CD4-positive, alpha-beta T cell (primary cell): ENCODE measurements at regions of chr3 and their contacts with region 1.

Region 1: GRCh38 chr3:152268555-152269425 is at the start of gene MBNL1:
- DNase-seq: peak; percentile 75 to 95 (median 82)
- ATAC-seq: peak; percentile 58
- H3K4me3 ChIP-seq: peak within 1 kb of the TSS; percentile 90
- H3K4me3 Mint-ChIP-seq: peak within 1 kb of the TSS; percentile 94
- H3K27ac ChIP-seq: peak within 1 kb of the TSS; percentile 90 to 100
- H3K27ac Mint-ChIP-seq: peak within 1 kb of the TSS; percentile 99
- H3K4me1 ChIP-seq: peaks cover 26% of the 10 kb centered on the region
- H3K4me1 Mint-ChIP-seq: peaks cover 67% of the 10 kb centered on the region
- H3K27me3 ChIP-seq: no peaks in the 10 kb centered on the region
- H3K27me3 Mint-ChIP-seq: no peaks in the 10 kb centered on the region
- CTCF ChIP-seq: no peak
- total RNA-seq, gene MBNL1: 551 to 561 TPM

Region 2: DNA sequence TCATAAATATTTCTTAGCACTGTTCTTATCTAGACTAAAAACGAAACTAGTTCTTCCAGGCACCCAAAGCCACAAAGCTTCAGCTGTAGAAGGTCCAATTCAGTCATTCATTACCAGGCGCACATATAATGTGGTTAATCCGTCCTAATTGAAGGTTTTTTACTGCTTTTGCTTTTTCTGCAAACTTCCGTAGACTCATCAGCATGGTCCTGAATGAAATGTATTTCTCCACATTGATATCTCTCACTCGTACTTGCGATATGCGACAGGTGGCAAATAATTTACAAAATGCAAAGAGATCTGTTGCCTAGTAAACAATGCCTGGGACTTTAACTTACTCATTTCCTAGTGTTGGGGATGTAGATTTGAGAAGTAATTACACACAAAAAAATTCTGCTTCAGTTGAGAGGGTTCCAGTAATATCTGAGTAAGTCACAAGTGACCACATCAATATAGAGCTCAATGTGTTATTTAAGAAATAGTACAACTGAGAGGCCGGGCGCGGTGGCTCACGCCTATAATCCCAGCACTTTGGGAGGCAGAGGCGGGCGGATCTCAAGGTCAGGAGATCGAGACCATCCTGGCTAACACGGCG is 75.0 kb before region 1 on chr3:
- CTCF ChIA-PET with region 1: interaction called, 3 read pairs
- POLR2A ChIA-PET with region 1: interaction called, 185 read pairs
- intact Hi-C with region 1: loop called (anchors 2 kb)
- DNase-seq: peak in 6 of 14 experiments; percentile 6 to 84 (median 62)
- ATAC-seq: peak; percentile 63
- H3K4me3 ChIP-seq: peak overlapping the region; percentile 50
- H3K4me3 Mint-ChIP-seq: peak overlapping the region; percentile 90
- H3K27ac ChIP-seq: peak overlapping the region; percentile 42 to 48
- H3K27ac Mint-ChIP-seq: peak overlapping the region; percentile 96
- H3K4me1 ChIP-seq: peaks cover 40% of the 10 kb centered on the region
- H3K4me1 Mint-ChIP-seq: peaks cover 87% of the 10 kb centered on the region
- H3K27me3 ChIP-seq: no peaks in the 10 kb centered on the region
- H3K27me3 Mint-ChIP-seq: no peaks in the 10 kb centered on the region
- CTCF ChIP-seq: no peak

Region 3: GRCh38 chr3:152222327-152222726 is 46.5 kb before region 1 on chr3:
- CTCF ChIA-PET with region 1: interaction called, 3 read pairs
- POLR2A ChIA-PET with region 1: interaction called, 20 read pairs
- intact Hi-C with region 1: no loop called
- DNase-seq: no peak
- ATAC-seq: peak; percentile 51
- H3K4me3 ChIP-seq: no peak overlapping the region
- H3K4me3 Mint-ChIP-seq: peak overlapping the region; percentile 77
- H3K27ac ChIP-seq: no peak overlapping the region
- H3K27ac Mint-ChIP-seq: peak overlapping the region; percentile 83
- H3K4me1 ChIP-seq: peaks cover 14% of the 10 kb centered on the region
- H3K4me1 Mint-ChIP-seq: peaks cover 69% of the 10 kb centered on the region
- H3K27me3 ChIP-seq: no peaks in the 10 kb centered on the region
- H3K27me3 Mint-ChIP-seq: no peaks in the 10 kb centered on the region
- CTCF ChIP-seq: no peak

Region 4: DNA sequence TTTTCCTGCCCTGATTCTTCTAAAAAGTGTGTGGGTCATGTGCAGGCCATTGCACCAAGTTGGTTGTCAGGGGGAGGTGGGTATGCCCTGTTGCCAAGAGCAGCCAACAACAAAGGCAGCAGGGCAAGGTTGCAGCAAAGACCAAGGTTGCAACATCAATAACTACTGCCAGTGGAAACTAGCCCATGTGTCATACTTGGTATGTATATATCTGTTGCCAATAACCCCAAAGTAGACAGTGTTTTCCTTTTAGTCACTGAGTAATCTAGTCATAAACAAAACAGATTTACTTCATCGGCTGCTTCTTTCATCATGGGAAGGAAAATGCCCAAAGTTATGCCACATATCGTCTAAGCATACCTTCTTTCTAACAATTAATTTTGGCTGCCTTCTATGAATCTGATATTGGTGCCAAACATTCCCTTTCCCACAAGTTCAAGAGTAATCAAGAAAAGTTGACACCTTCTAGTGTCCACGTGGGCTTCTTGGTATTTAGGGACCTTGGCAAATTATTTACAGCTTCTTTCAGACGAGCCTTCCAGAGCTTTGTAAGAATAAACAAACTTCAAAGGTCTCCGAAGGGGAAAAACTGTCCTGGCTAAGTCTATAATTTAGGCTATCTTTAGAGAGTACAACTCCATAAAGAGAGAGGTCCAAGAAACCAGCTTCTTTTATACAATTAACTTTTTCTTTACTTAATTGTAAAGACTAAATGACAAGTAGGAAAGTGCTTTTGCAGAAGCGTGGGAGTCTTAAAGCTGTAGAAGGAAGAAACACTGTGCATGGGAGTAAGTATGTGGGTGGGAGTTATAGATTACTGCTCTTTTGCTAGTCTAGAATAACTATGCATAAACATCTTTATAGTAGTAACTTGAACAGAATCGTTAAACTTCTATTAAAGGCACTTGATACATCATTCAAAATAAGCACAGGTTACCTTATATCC is 10.1 kb before region 1 on chr3:
- CTCF ChIA-PET with region 1: interaction called, 3 read pairs
- POLR2A ChIA-PET with region 1: interaction called, 247 read pairs
- intact Hi-C with region 1: loop called in 1 of 2 experiments (anchors 1 kb)
- DNase-seq: peak in 12 of 14 experiments; percentile 35 to 90 (median 58)
- ATAC-seq: peak; percentile 65
- H3K4me3 ChIP-seq: peak overlapping the region; percentile 19
- H3K4me3 Mint-ChIP-seq: peak overlapping the region; percentile 86
- H3K27ac ChIP-seq: peak overlapping the region; percentile 81 to 86
- H3K27ac Mint-ChIP-seq: peak overlapping the region; percentile 96
- H3K4me1 ChIP-seq: peaks cover 57% of the 10 kb centered on the region
- H3K4me1 Mint-ChIP-seq: peaks cover 96% of the 10 kb centered on the region
- H3K27me3 ChIP-seq: no peaks in the 10 kb centered on the region
- H3K27me3 Mint-ChIP-seq: no peaks in the 10 kb centered on the region
- CTCF ChIP-seq: no peak

Region 5: DNA sequence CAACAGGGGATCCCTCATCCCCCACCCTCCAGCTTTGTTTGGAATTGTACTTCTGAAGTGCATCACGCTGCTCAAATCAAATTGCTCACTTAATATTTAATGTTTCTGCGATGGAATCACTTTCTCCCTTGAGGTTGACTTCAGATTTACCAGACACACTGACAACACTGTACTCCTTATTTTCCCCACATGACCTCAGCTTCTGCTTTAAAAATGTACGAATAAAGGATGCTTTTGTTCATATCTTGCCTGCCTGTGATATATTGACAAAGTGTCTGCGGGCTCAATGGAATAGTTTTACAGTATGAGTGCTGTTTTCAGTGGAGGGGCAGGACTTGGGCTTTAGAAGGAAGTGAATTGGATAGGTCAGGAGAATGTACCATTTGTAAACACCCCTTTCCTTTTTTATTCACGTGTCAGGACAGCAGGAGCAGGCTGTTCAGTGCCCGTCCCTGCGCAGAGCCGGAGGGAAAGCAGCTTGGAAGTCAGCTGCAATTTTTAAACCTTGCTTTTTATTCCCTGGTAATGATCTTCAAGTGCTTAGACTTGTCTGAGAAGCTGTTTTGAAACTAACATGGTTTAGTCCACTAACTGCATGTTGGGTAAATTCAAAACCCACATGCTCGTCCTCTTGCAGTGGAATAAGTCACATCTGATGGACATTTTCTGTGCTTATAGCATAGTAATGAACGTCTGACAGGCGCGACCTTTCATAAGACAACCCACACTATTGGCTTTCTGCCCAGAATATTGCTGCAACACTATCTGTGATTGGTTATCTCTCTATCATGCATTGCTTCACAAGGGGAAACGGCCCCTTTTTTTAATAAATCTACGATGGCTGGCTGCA is 29.8 kb after region 1 on chr3:
- CTCF ChIA-PET with region 1: interaction called, 3 read pairs
- POLR2A ChIA-PET with region 1: interaction called, 21 read pairs
- intact Hi-C with region 1: loop called in 1 of 2 experiments (anchors 1 kb)
- DNase-seq: peak in 10 of 14 experiments; percentile 22 to 90 (median 54)
- ATAC-seq: peak; percentile 74
- H3K4me3 ChIP-seq: peak overlapping the region; percentile 36
- H3K4me3 Mint-ChIP-seq: peak overlapping the region; percentile 79
- H3K27ac ChIP-seq: peak overlapping the region; percentile 56 to 60
- H3K27ac Mint-ChIP-seq: peak overlapping the region; percentile 92
- H3K4me1 ChIP-seq: peaks cover 55% of the 10 kb centered on the region
- H3K4me1 Mint-ChIP-seq: peaks cover 79% of the 10 kb centered on the region
- H3K27me3 ChIP-seq: no peaks in the 10 kb centered on the region
- H3K27me3 Mint-ChIP-seq: no peaks in the 10 kb centered on the region
- CTCF ChIP-seq: no peak

Region 6: DNA sequence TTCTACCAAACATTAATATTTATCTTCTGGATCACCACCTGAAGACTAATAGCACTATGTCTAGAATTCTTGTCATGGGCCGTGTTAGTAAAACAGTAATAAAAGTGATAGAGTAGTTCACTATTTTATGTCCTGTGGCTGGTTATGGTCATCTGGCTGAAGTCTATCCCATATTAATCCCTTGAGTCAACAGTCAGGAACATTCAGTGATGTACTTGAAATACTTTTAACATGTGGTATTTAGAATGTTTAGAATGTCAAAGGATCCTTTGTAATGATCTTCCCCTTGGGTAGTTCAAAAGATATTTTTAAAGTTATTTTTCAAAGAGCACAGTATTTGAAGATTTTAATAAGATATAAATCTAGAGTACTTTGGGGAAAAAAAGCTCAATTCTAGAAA is 117.0 kb after region 1 on chr3:
- CTCF ChIA-PET with region 1: no interaction called
- POLR2A ChIA-PET with region 1: no interaction called
- intact Hi-C with region 1: loop called in 1 of 2 experiments (anchors 10 kb)
- DNase-seq: no peak
- ATAC-seq: no peak
- H3K4me3 ChIP-seq: no peak overlapping the region
- H3K4me3 Mint-ChIP-seq: no peak overlapping the region
- H3K27ac ChIP-seq: no peak overlapping the region
- H3K27ac Mint-ChIP-seq: peak overlapping the region; percentile 71
- H3K4me1 ChIP-seq: peaks cover 22% of the 10 kb centered on the region
- H3K4me1 Mint-ChIP-seq: peaks cover 88% of the 10 kb centered on the region
- H3K27me3 ChIP-seq: no peaks in the 10 kb centered on the region
- H3K27me3 Mint-ChIP-seq: no peaks in the 10 kb centered on the region
- CTCF ChIP-seq: no peak